ENCODE measurements at regions of chr11 and their contacts with region 1.

Region 1: GRCh38 chr11:75924966-75925784 is 110.2 kb downstream of the UVRAG start:
- DNase-seq: peak; percentile 42
- H3K4me3 ChIP-seq: peak overlapping the region in 2 of 3 experiments; percentile 16 to 25
- H3K27ac ChIP-seq: peak overlapping the region; percentile 42
- H3K4me1 ChIP-seq: peaks cover 25% of the 10 kb centered on the region
- H3K27me3 ChIP-seq: no peaks in the 10 kb centered on the region
- CTCF ChIP-seq: no peak

Region 2: GRCh38 chr11:76041210-76041609 is 116.0 kb after region 1 on chr11:
- CTCF ChIA-PET with region 1: no interaction called
- dilution Hi-C with region 1: no loop called
- in situ Hi-C with region 1: no loop called
- intact Hi-C with region 1: no loop called
- DNase-seq: no peak
- H3K4me3 ChIP-seq: no peak overlapping the region
- H3K27ac ChIP-seq: no peak overlapping the region
- H3K4me1 ChIP-seq: no peaks in the 10 kb centered on the region
- H3K27me3 ChIP-seq: no peaks in the 10 kb centered on the region
- CTCF ChIP-seq: no peak

Region 3: GRCh38 chr11:76339221-76339620 is 414.0 kb after region 1 on chr11:
- CTCF ChIA-PET with region 1: no interaction called
- dilution Hi-C with region 1: no loop called
- in situ Hi-C with region 1: loop called in 1 of 2 experiments (anchors 25 kb)
- intact Hi-C with region 1: no loop called
- DNase-seq: no peak
- H3K4me3 ChIP-seq: no peak overlapping the region
- H3K27ac ChIP-seq: no peak overlapping the region
- H3K4me1 ChIP-seq: no peaks in the 10 kb centered on the region
- H3K27me3 ChIP-seq: no peaks in the 10 kb centered on the region
- CTCF ChIP-seq: no peak

Measured in mammary epithelial cell (primary cell).